ENCODE measurements at regions of chr1 and their contacts with region 1.

Region 1: GRCh38 chr1:41268154-41268770 is 26.2 kb upstream of the SCMH1 start:
- DNase-seq: peak in 1 of 2 donors; percentile 86
- H3K4me3 ChIP-seq: no peak overlapping the region
- H3K27ac ChIP-seq: no peak overlapping the region
- H3K4me1 ChIP-seq: no peaks in the 10 kb centered on the region
- H3K27me3 ChIP-seq: no peaks in the 10 kb centered on the region
- CTCF ChIP-seq: peak; percentile 91 to 98 (median 97)

Region 2: GRCh38 chr1:41038105-41038504 is 230.2 kb before region 1 on chr1:
- intact Hi-C with region 1: no loop called
- DNase-seq: no peak
- H3K4me3 ChIP-seq: no peak overlapping the region
- H3K27ac ChIP-seq: no peak overlapping the region
- H3K4me1 ChIP-seq: no peaks in the 10 kb centered on the region
- H3K27me3 ChIP-seq: no peaks in the 10 kb centered on the region
- CTCF ChIP-seq: peak in 1 of 3 experiments; percentile 26

Region 3: DNA sequence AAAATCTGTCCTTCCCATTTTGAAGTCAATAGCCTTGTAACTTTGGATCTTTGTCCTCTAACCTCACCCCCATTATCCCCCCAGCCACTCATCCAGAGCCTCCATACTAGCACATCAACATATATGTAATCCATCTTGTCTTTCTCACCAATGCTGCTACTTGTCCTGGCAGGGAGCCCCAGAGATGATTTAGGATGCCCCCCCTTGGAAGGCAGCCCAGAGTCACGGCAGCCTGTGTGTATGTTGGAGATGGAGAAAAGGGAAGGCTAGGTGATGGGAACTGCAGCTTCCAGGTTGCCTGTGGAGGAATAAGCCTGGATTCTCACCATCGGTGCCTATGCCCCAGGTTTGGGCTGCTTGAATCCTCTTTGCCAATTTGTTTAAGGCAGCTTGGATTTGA is 25.5 kb after region 1 on chr1:
- intact Hi-C with region 1: loop called (anchors 2 kb)
- DNase-seq: no peak
- H3K4me3 ChIP-seq: no peak overlapping the region
- H3K27ac ChIP-seq: no peak overlapping the region
- H3K4me1 ChIP-seq: no peaks in the 10 kb centered on the region
- H3K27me3 ChIP-seq: no peaks in the 10 kb centered on the region
- CTCF ChIP-seq: no peak

Region 4: GRCh38 chr1:41432481-41433280 is 164.4 kb after region 1 on chr1:
- intact Hi-C with region 1: loop called (anchors 1 kb)
- DNase-seq: peak; percentile 52 to 96
- H3K4me3 ChIP-seq: peak overlapping the region; percentile 0 to 13
- H3K27ac ChIP-seq: peak overlapping the region; percentile 46 to 63
- H3K4me1 ChIP-seq: peaks cover 23 to 32% of the 10 kb centered on the region in 2 donors
- H3K27me3 ChIP-seq: no peaks in the 10 kb centered on the region
- CTCF ChIP-seq: peak; percentile 90 to 98 (median 97)

Region 5: GRCh38 chr1:41516168-41517061 is 248.2 kb after region 1 on chr1:
- intact Hi-C with region 1: loop called (anchors 2 kb)
- DNase-seq: peak; percentile 55 to 96
- H3K4me3 ChIP-seq: peak overlapping the region; percentile 40 to 69
- H3K27ac ChIP-seq: peak overlapping the region in 1 of 2 donors; percentile 40
- H3K4me1 ChIP-seq: peaks cover 3 to 7% of the 10 kb centered on the region in 2 donors
- H3K27me3 ChIP-seq: no peaks in the 10 kb centered on the region
- CTCF ChIP-seq: peak; percentile 88 to 96 (median 89)

Region 6: DNA sequence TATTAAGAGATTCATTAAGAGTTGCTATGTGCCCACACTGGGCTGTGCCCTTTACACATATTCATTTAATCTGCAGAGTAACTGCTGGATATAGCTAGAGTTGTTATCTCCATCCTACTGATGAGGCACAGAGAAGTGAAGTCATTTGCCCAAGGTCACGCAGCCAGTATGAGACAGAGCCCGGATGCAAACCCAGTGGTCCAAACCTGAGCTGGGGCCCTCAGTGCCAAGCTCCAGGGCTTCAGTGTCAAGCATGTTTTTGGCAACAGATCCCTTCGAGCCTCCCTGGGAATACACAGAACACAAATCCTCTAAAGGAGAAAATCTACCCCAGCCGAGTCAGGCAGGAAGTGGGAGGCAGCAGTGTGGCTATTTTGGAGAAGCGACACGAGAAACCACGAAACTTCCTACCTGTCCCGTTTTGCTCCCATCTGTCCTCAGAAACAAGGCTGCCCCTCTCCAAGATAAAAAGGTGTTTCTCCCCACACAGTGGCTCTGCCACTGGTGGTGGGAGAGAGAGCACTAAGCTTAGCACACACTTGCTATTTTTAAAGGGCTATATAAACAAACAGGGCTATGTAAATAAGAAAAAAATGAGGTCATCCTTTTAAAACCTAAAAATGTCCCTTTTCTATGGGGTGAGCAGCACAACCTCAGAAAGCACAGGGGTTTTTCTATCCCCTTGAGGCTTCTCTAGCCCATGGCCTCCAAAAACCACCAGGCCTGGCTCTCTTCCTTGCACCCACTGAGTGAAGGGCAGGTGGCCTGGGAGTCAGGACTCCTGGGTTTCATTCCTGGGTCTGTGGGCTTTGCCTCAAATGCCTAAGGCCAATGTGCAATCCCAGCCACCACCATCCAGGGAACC is 354.8 kb after region 1 on chr1:
- intact Hi-C with region 1: no loop called
- DNase-seq: no peak
- H3K4me3 ChIP-seq: no peak overlapping the region
- H3K27ac ChIP-seq: no peak overlapping the region
- H3K4me1 ChIP-seq: peaks cover 4 to 5% of the 10 kb centered on the region in 2 donors
- H3K27me3 ChIP-seq: no peaks in the 10 kb centered on the region
- CTCF ChIP-seq: no peak